Esophagus squamous epithelium (tissue), 5 donors: ENCODE measurements at regions of chr11 and their contacts with region 1.

Region 1: DNA sequence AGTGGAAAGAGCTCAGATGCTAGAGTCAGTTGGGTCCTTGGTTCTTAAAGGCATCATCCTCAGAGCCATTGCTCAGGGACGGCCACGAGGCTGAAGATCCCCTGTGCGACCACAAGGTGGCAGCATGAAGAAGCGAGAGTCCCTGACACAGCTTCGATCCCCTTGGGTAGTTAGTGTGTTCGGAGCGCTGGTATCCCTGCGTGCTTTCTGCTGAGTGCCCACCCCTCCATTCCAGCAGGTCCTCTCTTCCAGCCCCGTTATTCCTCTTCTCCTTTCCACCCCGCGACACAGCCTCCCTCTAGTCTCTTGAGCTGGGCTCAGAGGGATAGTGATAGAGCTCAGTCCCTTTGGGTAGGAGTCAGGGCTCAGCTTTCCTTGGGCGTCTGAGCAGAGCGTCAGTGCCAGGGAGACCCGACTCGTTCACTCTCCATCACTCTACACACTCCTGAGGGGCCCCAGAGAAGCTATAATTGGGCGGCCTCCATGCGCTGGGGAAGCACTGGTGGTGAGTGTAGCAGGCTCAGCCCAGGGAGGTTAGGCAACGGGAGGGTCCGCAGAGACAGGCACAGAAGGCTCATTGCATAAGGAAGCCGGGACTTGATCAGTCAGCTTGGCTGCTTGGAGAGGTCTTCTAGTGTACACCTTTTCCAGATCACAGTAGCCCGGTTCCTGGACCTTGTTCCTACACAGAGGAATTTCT is at the start of gene OR51D1:
- DNase-seq: no peak
- H3K4me3 ChIP-seq: peak within 1 kb of the TSS in 1 of 4 donors; percentile 45
- H3K27ac ChIP-seq: no peak within 1 kb of the TSS
- H3K4me1 ChIP-seq: peaks cover 0 to 6% (median 4%) of the 10 kb centered on the region in 3 donors
- H3K27me3 ChIP-seq: peaks cover 0 to 12% (median 0%) of the 10 kb centered on the region in 4 donors
- CTCF ChIP-seq: peak; percentile 41 to 86 (median 70)
- POLR2A ChIP-seq: no peak
- total RNA-seq, gene OR51D1: not detected

Region 2: GRCh38 chr11:4187055-4187988 is 449.8 kb before region 1 on chr11:
- intact Hi-C with region 1: loop called (anchors 10 kb)
- DNase-seq: no peak
- H3K4me3 ChIP-seq: peak overlapping the region; percentile 48 to 74 (median 66)
- H3K27ac ChIP-seq: peak overlapping the region; percentile 51 to 74 (median 64)
- H3K4me1 ChIP-seq: peaks cover 0 to 31% (median 0%) of the 10 kb centered on the region in 3 donors
- H3K27me3 ChIP-seq: no peaks in the 10 kb centered on the region
- CTCF ChIP-seq: peak; percentile 91 to 97 (median 94)
- POLR2A ChIP-seq: no peak

Region 3: GRCh38 chr11:4560467-4560866 is 76.6 kb before region 1 on chr11:
- intact Hi-C with region 1: no loop called
- DNase-seq: no peak
- H3K4me3 ChIP-seq: no peak overlapping the region
- H3K27ac ChIP-seq: no peak overlapping the region
- H3K4me1 ChIP-seq: peaks cover 0 to 20% (median 7%) of the 10 kb centered on the region in 3 donors
- H3K27me3 ChIP-seq: no peaks in the 10 kb centered on the region
- CTCF ChIP-seq: no peak
- POLR2A ChIP-seq: no peak